ENCODE measurements at regions of chr20 and their contacts with region 1.

Region 1: DNA sequence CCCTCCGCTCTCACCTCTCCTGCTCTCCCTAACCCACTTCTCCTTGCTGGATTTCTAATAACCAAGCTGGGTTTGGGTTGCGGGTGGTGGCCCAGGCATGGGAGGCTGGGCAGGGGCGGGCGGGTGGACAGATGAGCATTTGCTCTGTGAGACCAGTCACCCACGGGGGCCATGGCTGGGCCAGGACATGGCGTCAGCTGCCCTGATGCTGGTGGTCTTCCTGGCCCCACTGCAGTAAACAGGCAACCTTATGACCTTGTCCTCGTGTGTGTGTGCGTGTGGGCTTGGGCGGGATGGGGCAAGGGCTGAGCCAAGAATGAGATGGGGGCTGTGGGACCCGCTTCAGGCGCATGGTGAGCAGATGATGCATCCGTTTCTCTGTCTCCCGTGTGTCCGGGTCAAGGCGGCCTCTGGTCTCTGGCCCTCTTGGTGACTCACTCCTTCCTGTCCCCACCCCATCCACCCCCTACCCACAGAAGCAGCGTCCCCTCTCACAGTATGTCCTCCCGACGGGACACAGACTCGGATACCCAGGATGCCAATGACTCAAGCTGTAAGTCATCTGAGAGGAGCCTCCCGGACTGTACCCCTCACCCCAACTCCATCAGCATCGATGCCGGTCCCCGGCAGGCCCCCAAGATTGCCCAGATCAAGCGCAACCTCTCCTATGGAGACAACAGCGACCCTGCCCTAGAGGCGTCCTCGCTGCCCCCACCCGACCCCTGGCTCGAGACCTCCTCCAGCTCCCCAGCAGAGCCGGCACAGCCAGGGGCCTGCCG is 41.4 kb upstream of the MYL9 start:
- DNase-seq: no peak
- ATAC-seq: peak; percentile 9 to 50 (median 18)
- H3K4me3 ChIP-seq: no peak overlapping the region
- H3K27ac ChIP-seq: no peak overlapping the region
- H3K4me1 ChIP-seq: peaks cover 4% of the 10 kb centered on the region
- H3K27me3 ChIP-seq: no peaks in the 10 kb centered on the region
- CTCF ChIP-seq: no peak

Region 2: GRCh38 chr20:36214684-36215256 is 285.1 kb before region 1 on chr20:
- intact Hi-C with region 1: loop called in 1 of 2 experiments (anchors 5 kb)
- DNase-seq: no peak
- ATAC-seq: peak in 2 of 4 donors; percentile 54 to 69
- H3K4me3 ChIP-seq: no peak overlapping the region
- H3K27ac ChIP-seq: no peak overlapping the region
- H3K4me1 ChIP-seq: no peaks in the 10 kb centered on the region
- H3K27me3 ChIP-seq: no peaks in the 10 kb centered on the region
- CTCF ChIP-seq: peak; percentile 48

Measured in psoas muscle (tissue), 8 donors.